MCF 10A (cell line): ENCODE measurements at regions of chr1 and their contacts with region 1.

Region 1: DNA sequence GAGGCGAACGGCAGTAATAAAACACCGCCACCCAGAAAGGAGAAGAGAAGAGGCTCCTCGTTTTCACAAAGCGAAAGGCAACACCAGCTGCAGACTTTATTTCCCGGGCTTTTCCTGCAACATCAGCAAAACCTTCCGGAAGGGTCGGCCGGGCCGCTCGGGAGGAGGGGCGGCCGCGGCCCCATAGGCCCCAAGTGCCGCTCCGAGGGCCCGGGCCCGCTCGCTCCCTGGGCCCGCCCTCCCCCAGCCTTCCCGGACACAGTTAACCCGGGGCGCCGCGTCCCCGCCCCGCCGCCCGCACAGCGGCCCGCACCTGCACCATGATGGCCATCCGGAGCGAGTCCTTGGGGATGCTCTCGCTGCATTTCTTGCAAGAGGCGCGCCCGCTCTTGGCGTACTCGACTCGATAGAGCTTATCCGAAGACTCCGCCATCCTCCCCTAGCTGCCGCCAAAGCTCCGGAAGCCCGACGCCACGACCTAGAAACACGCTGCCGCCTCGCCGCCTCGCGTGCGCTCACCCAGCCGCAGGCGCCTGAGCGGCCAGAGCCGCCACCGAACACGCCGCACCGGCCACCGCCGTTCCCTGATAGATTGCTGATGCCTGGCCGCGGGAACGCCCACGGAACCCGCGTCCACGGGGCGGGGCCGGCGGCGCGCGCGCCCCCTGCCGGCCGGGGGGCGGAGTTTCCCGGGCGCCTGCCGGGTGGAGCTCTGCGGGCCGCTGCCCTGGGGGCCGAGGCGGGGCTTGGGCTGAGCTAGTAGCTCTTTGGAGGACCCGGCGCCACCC is at the start of gene PARP1:
- DNase-seq: peak; percentile 98
- H3K4me3 Mint-ChIP-seq: peak within 1 kb of the TSS; percentile 78
- H3K27ac Mint-ChIP-seq: peak within 1 kb of the TSS; percentile 82
- H3K4me1 Mint-ChIP-seq: peaks cover 38% of the 10 kb centered on the region
- H3K27me3 Mint-ChIP-seq: no peaks in the 10 kb centered on the region
- CTCF ChIP-seq: peak; percentile 99
- total RNA-seq, gene PARP1: 192 and 235 TPM in 2 replicates

Region 2: GRCh38 chr1:226128487-226129075 is 279.1 kb before region 1 on chr1:
- CTCF ChIA-PET with region 1: interaction called, 113 read pairs
- POLR2A ChIA-PET with region 1: interaction called, 68 read pairs
- intact Hi-C with region 1: loop called (anchors 2 kb)
- DNase-seq: peak; percentile 57
- H3K4me3 Mint-ChIP-seq: peak overlapping the region; percentile 21
- H3K27ac Mint-ChIP-seq: peak overlapping the region; percentile 73
- H3K4me1 Mint-ChIP-seq: peaks cover 42% of the 10 kb centered on the region
- H3K27me3 Mint-ChIP-seq: no peaks in the 10 kb centered on the region
- CTCF ChIP-seq: no peak

Region 3: DNA sequence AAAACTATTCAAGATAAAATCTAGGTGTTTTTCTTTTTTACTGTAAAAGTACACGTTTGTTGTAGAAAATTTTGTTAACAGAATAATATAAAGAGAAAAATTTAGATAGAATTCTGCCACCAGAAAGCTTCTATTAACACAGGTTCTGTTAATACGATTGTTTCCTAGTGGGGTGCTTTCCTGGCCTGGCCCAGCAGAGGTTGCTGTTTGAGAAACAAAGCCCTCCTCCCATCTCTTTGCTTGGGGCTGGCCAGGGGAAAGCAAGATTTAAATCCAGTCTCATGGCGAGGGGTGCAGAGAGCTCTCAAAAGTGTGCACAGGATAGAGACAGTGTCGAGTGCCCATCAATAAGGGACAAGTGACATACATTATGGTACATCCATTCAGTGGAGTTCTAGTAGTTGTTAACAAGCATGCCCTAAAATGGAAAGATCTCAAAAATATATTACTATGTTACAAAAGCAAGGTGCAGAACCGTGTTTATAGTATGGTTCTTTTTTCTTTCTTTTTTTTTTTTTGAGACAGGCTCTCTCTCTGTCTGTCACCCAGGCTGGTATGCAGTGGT is 206.6 kb before region 1 on chr1:
- CTCF ChIA-PET with region 1: interaction called, 12 read pairs
- POLR2A ChIA-PET with region 1: no interaction called
- intact Hi-C with region 1: no loop called
- DNase-seq: peak; percentile 54
- H3K4me3 Mint-ChIP-seq: no peak overlapping the region
- H3K27ac Mint-ChIP-seq: no peak overlapping the region
- H3K4me1 Mint-ChIP-seq: no peaks in the 10 kb centered on the region
- H3K27me3 Mint-ChIP-seq: peaks cover 13% of the 10 kb centered on the region
- CTCF ChIP-seq: peak; percentile 39

Region 4: GRCh38 chr1:226308723-226309315 is 98.9 kb before region 1 on chr1 and contains the start of gene LIN9:
- CTCF ChIA-PET with region 1: interaction called, 12 read pairs
- POLR2A ChIA-PET with region 1: interaction called, 48 read pairs
- intact Hi-C with region 1: no loop called
- DNase-seq: peak; percentile 98
- H3K4me3 Mint-ChIP-seq: peak within 1 kb of the TSS; percentile 84
- H3K27ac Mint-ChIP-seq: peak within 1 kb of the TSS; percentile 82
- H3K4me1 Mint-ChIP-seq: peaks cover 34% of the 10 kb centered on the region
- H3K27me3 Mint-ChIP-seq: no peaks in the 10 kb centered on the region
- CTCF ChIP-seq: no peak
- total RNA-seq, gene LIN9: 10.3 and 10.4 TPM in 2 replicates

Region 5: DNA sequence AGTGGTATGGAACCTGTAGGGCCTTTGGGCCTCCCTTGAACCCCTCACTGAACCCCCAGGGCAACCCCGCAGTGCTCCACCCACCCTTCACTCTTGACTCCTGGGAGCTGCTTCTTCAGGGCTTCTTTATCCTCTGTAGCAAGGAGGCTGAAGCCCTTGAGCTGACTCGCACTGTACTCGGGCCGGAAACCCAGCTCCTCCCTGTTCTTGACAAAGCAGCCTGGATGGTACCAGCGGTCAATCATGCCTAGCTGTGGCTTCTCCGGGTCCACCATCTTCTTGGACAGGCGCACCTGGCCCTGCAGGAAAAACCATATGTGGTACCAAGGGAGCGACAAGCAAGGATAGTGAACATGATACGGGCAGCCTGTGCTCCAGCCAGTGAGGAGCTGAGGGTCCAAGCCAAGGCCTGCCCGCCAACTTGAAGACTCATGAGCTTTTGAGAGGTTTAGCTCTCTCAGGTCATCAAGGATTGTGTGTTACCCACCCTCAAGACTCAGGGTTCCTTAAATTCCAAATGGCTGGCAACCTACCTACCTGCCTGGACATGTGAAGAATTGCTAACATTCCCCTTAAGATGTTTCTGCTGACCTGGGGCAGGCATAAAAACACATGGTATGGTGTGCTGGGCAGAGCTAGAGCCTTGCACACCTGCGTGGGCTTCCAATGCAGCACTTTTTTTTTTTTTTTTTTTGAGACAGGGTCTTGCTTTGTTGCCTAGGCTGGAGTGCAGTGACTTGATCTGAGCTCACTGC is 17.2 kb before region 1 on chr1:
- CTCF ChIA-PET with region 1: interaction called, 11 read pairs
- POLR2A ChIA-PET with region 1: interaction called, 10 read pairs
- intact Hi-C with region 1: no loop called
- DNase-seq: no peak
- H3K4me3 Mint-ChIP-seq: no peak overlapping the region
- H3K27ac Mint-ChIP-seq: no peak overlapping the region
- H3K4me1 Mint-ChIP-seq: no peaks in the 10 kb centered on the region
- H3K27me3 Mint-ChIP-seq: no peaks in the 10 kb centered on the region
- CTCF ChIP-seq: no peak

Region 6: GRCh38 chr1:226417830-226418546 is 10.3 kb after region 1 on chr1:
- CTCF ChIA-PET with region 1: interaction called, 66 read pairs
- POLR2A ChIA-PET with region 1: interaction called, 7 read pairs
- intact Hi-C with region 1: no loop called
- DNase-seq: no peak
- H3K4me3 Mint-ChIP-seq: no peak overlapping the region
- H3K27ac Mint-ChIP-seq: no peak overlapping the region
- H3K4me1 Mint-ChIP-seq: no peaks in the 10 kb centered on the region
- H3K27me3 Mint-ChIP-seq: no peaks in the 10 kb centered on the region
- CTCF ChIP-seq: no peak

Region 7: DNA sequence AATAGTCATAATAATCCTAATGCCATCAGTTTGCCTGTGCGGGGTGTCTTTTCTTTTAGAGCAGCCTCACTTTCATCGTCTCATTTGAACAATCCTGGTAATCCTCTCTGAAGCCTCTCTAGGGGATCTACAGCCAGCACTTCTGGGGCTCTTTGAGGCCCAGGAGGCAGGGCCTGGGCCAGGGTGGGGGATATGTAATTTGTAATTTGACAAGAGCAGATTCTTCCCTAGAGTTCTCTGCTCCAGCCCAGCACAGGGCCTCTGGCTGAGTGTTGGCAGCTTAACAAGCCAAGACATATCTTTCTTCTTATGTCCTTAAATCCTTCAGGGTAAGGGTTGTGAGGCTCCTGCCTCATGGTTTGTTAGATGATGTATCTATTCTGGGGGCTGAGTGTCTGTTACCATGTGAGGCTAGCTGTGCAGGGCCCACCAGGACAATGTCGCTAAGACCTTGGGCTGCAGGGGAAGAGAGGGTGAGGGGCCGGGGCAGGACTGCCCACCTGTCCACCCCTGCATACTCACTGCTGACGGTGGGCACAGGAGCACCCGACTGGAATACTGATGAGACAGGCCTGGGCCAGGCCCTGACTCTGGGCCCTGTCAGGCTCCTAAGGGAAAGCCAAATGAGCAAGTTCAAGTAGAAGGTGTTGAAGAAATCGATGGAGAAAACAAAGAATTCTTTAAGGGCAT is 45.5 kb after region 1 on chr1:
- CTCF ChIA-PET with region 1: no interaction called
- POLR2A ChIA-PET with region 1: no interaction called
- intact Hi-C with region 1: no loop called
- DNase-seq: no peak
- H3K4me3 Mint-ChIP-seq: no peak overlapping the region
- H3K27ac Mint-ChIP-seq: no peak overlapping the region
- H3K4me1 Mint-ChIP-seq: no peaks in the 10 kb centered on the region
- H3K27me3 Mint-ChIP-seq: peaks cover 13% of the 10 kb centered on the region
- CTCF ChIP-seq: no peak

Region 8: GRCh38 chr1:226786550-226786949 is 378.9 kb after region 1 on chr1:
- CTCF ChIA-PET with region 1: no interaction called
- POLR2A ChIA-PET with region 1: no interaction called
- intact Hi-C with region 1: no loop called
- DNase-seq: no peak
- H3K4me3 Mint-ChIP-seq: no peak overlapping the region
- H3K27ac Mint-ChIP-seq: no peak overlapping the region
- H3K4me1 Mint-ChIP-seq: no peaks in the 10 kb centered on the region
- H3K27me3 Mint-ChIP-seq: no peaks in the 10 kb centered on the region
- CTCF ChIP-seq: no peak